ENCODE measurements at regions of chr6 and their contacts with region 1.

Region 1: DNA sequence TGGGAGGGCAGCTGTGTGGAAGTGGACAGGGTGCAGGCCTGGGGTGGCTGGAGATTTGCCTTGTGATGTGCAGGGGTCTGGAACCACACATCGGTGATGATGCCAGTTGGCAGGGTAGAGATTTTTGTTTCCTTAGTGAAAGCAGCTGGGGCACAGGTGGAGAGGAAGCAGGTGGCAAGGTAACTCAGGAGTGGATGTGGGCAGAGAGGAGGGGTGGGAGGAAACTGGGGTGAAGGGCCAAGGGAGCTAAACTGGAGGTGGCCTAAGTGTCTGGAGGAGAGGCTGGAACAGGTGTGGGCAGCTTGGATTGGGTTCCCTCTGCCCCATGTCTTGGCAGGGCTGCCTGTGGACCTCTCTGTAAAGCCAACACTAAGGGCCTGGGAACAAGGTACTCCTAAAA is 4.7 kb upstream of the SCUBE3 start:
- DNase-seq: no peak
- ATAC-seq: no peak
- H3K4me3 ChIP-seq: no peak overlapping the region
- H3K27ac ChIP-seq: no peak overlapping the region
- H3K4me1 ChIP-seq: no peaks in the 10 kb centered on the region
- H3K27me3 ChIP-seq: peaks cover 2 to 9% of the 10 kb centered on the region in 2 experiments
- CTCF ChIP-seq: no peak
- EP300 ChIP-seq: no peak
- POLR2A ChIP-seq: no peak
- RAD21 ChIP-seq: no peak

Region 2: GRCh38 chr6:34986845-34987246 is 222.2 kb before region 1 on chr6:
- CTCF ChIA-PET with region 1: interaction called, 48 read pairs
- POLR2A ChIA-PET with region 1: no interaction called
- RAD21 ChIA-PET with region 1: interaction called, 10 read pairs
- SMC1A ChIA-PET with region 1: interaction called, 12 read pairs
- in situ Hi-C with region 1: no loop called
- intact Hi-C with region 1: loop called (anchors 5 kb)
- DNase-seq: no peak
- ATAC-seq: peak; percentile 79
- H3K4me3 ChIP-seq: no peak overlapping the region
- H3K27ac ChIP-seq: no peak overlapping the region
- H3K4me1 ChIP-seq: peaks cover 3% of the 10 kb centered on the region
- H3K27me3 ChIP-seq: no peaks in the 10 kb centered on the region
- CTCF ChIP-seq: peak; percentile 70 to 83 (median 79)
- EP300 ChIP-seq: no peak
- POLR2A ChIP-seq: no peak
- RAD21 ChIP-seq: peak; percentile 94

Region 3: GRCh38 chr6:35195120-35195780 is 13.8 kb before region 1 on chr6:
- CTCF ChIA-PET with region 1: interaction called, 39 read pairs
- POLR2A ChIA-PET with region 1: interaction called, 5 read pairs
- RAD21 ChIA-PET with region 1: no interaction called
- SMC1A ChIA-PET with region 1: interaction called, 5 read pairs
- in situ Hi-C with region 1: no loop called
- intact Hi-C with region 1: no loop called
- DNase-seq: no peak
- ATAC-seq: no peak
- H3K4me3 ChIP-seq: no peak overlapping the region
- H3K27ac ChIP-seq: no peak overlapping the region
- H3K4me1 ChIP-seq: no peaks in the 10 kb centered on the region
- H3K27me3 ChIP-seq: no peaks in the 10 kb centered on the region; a peak in 1 of 4 replicates
- CTCF ChIP-seq: no peak
- EP300 ChIP-seq: no peak
- POLR2A ChIP-seq: no peak
- RAD21 ChIP-seq: no peak

Region 4: GRCh38 chr6:35230950-35231349 is 21.9 kb after region 1 on chr6:
- CTCF ChIA-PET with region 1: interaction called, 10 read pairs
- POLR2A ChIA-PET with region 1: interaction called, 4 read pairs
- RAD21 ChIA-PET with region 1: interaction called, 3 read pairs
- SMC1A ChIA-PET with region 1: interaction called, 3 read pairs
- in situ Hi-C with region 1: no loop called
- intact Hi-C with region 1: no loop called
- DNase-seq: no peak
- ATAC-seq: no peak
- H3K4me3 ChIP-seq: no peak overlapping the region
- H3K27ac ChIP-seq: no peak overlapping the region
- H3K4me1 ChIP-seq: no peaks in the 10 kb centered on the region
- H3K27me3 ChIP-seq: no peaks in the 10 kb centered on the region
- CTCF ChIP-seq: no peak
- EP300 ChIP-seq: no peak
- POLR2A ChIP-seq: no peak
- RAD21 ChIP-seq: no peak

Region 5: GRCh38 chr6:35754448-35755277 is 545.6 kb after region 1 on chr6:
- CTCF ChIA-PET with region 1: no interaction called
- POLR2A ChIA-PET with region 1: no interaction called
- RAD21 ChIA-PET with region 1: no interaction called
- SMC1A ChIA-PET with region 1: no interaction called
- in situ Hi-C with region 1: no loop called
- intact Hi-C with region 1: no loop called
- DNase-seq: no peak
- ATAC-seq: no peak
- H3K4me3 ChIP-seq: no peak overlapping the region
- H3K27ac ChIP-seq: no peak overlapping the region
- H3K4me1 ChIP-seq: peaks cover 22% of the 10 kb centered on the region
- H3K27me3 ChIP-seq: no peaks in the 10 kb centered on the region
- CTCF ChIP-seq: peak in 1 of 3 experiments; percentile 11; a peak in 1 of 6 replicates
- EP300 ChIP-seq: no peak
- POLR2A ChIP-seq: no peak
- RAD21 ChIP-seq: no peak

Measured in GM12878 (cell line).